Left lung (tissue), 14 donors: ENCODE measurements at regions of chr22 and their contacts with region 1.

Region 1: GRCh38 chr22:44697423-44698141 is 4.4 kb upstream of the PRR5 start:
- DNase-seq: peak in 3 of 4 donors; percentile 77 to 93 (median 83)
- ATAC-seq: peak; percentile 71
- H3K4me3 ChIP-seq: no peak overlapping the region
- H3K27ac ChIP-seq: no peak overlapping the region
- H3K4me1 ChIP-seq: peaks cover 3 to 16% of the 10 kb centered on the region in 2 donors
- H3K27me3 ChIP-seq: peaks cover 0 to 4% of the 10 kb centered on the region in 2 donors
- CTCF ChIP-seq: peak; percentile 93

Region 2: DNA sequence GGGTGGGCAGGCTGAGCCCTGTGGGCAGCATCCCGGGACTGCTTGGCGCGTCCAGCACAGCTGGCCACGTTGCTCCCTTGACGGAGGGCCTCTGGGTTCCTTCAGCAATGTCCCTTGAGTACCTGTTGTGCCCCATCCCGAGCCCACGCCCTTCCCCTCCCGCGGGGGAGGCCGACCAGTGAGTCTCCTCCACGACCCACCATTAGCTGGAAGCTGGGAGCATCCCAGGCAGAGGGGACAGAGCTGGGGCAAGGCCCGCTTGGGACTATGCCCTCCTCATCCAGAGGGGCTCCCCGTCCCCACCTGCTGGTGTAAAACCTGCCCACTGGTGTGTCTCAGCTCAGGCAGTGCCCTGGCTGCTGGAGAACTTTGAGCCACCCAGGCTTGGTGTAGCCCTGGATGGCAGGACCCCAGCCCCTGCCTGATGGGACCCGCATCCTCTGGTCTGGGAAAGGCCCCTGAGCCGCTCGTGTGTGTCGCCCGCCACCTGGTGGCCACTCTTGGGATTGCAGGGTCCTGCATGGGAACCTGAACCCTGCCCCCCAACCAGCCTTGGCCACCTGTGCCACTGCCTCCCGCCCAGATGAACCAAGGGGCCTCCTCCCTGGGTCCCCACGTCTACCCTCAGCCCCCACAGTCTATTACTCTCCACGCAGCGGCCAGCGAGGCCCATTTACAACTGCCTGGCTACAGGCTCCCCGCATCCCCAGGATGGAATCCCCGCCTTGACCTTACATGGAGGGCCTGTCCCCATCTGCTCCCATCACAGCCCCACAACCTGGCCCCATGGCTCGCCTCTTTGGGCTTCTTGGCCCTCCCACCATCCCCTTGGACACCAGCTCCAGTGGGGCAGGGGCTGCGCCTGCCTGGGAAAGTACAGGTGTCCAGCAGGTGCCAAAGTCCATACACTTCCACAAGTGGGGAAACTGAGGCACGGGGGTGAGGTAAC is 38.2 kb after region 1 on chr22:
- intact Hi-C with region 1: loop called in 1 of 2 experiments (anchors 2 kb)
- DNase-seq: peak in 3 of 4 donors; percentile 75 to 96 (median 75)
- ATAC-seq: peak; percentile 72
- H3K4me3 ChIP-seq: no peak overlapping the region
- H3K27ac ChIP-seq: no peak overlapping the region
- H3K4me1 ChIP-seq: no peaks in the 10 kb centered on the region
- H3K27me3 ChIP-seq: peaks cover 0 to 41% of the 10 kb centered on the region in 2 donors
- CTCF ChIP-seq: peak; percentile 99

Region 3: GRCh38 chr22:44862981-44863736 is 165.6 kb after region 1 on chr22:
- intact Hi-C with region 1: no loop called
- DNase-seq: peak in 1 of 4 donors; percentile 50
- ATAC-seq: no peak
- H3K4me3 ChIP-seq: no peak overlapping the region
- H3K27ac ChIP-seq: no peak overlapping the region
- H3K4me1 ChIP-seq: no peaks in the 10 kb centered on the region
- H3K27me3 ChIP-seq: peaks cover 0 to 9% of the 10 kb centered on the region in 2 donors
- CTCF ChIP-seq: no peak